ENCODE measurements at regions of chr3 and their contacts with region 1.

Region 1: GRCh38 chr3:182490596-182491491 is 302.5 kb upstream of the ATP11B start:
- DNase-seq: peak; percentile 7
- ATAC-seq: 0 out of 3 replicates have a peak, but pooled peaks have one; percentile 38
- H3K4me3 ChIP-seq: no peak overlapping the region
- H3K27ac ChIP-seq: no peak overlapping the region
- H3K4me1 ChIP-seq: no peaks in the 10 kb centered on the region
- H3K27me3 ChIP-seq: no peaks in the 10 kb centered on the region
- CTCF ChIP-seq: peak; percentile 41
- EP300 ChIP-seq: no peak
- POLR2A ChIP-seq: no peak
- RAD21 ChIP-seq: no peak

Region 2: DNA sequence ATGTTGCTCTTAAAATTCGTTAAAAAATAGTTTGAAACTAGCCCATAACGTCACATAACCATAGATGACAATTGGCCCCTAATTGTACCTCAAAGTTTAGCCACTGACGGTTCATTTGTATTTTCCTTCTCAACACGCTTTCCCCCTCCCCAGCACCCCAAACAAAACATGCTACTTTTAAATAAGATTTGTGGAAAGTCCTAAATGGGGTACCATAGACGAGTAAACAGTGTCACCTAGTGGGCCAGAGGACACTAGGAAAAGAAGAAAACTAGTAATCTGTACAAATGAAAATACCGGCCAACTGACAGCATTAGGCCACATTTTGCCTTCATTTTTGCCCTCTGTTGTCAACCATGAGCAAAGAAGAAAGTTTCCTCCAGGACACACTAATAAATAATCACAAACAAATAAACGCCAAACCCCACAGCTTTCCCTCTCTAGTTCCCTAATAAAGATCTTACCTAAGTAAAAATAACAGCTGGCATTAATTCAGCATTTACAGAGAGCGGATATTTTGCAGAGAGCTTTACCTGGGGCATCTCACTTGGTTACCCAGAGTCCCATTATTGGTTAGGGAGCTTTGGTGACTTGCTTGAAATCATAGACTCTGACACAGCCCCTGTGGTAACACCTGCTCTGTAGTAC is 127.4 kb after region 1 on chr3:
- CTCF ChIA-PET with region 1: no interaction called
- POLR2A ChIA-PET with region 1: no interaction called
- in situ Hi-C with region 1: no loop called
- intact Hi-C with region 1: loop called (anchors 10 kb)
- DNase-seq: peak; percentile 12
- ATAC-seq: peak; percentile 68
- H3K4me3 ChIP-seq: no peak overlapping the region
- H3K27ac ChIP-seq: no peak overlapping the region
- H3K4me1 ChIP-seq: no peaks in the 10 kb centered on the region
- H3K27me3 ChIP-seq: no peaks in the 10 kb centered on the region
- CTCF ChIP-seq: peak; percentile 70
- EP300 ChIP-seq: no peak
- POLR2A ChIP-seq: no peak
- RAD21 ChIP-seq: peak; percentile 53